MCF 10A (cell line): ENCODE measurements at regions of chr5 and their contacts with region 1.

Region 1: GRCh38 chr5:142145106-142145900 is 36.7 kb downstream of the NDFIP1 start:
- DNase-seq: peak; percentile 85
- H3K4me3 Mint-ChIP-seq: no peak overlapping the region
- H3K27ac Mint-ChIP-seq: no peak overlapping the region
- H3K4me1 Mint-ChIP-seq: no peaks in the 10 kb centered on the region
- H3K27me3 Mint-ChIP-seq: no peaks in the 10 kb centered on the region
- CTCF ChIP-seq: peak; percentile 78

Region 2: GRCh38 chr5:141691867-141692532 is 453.3 kb before region 1 on chr5:
- CTCF ChIA-PET with region 1: interaction called, 9 read pairs
- POLR2A ChIA-PET with region 1: no interaction called
- intact Hi-C with region 1: loop called (anchors 2 kb)
- DNase-seq: peak; percentile 87
- H3K4me3 Mint-ChIP-seq: peak overlapping the region; percentile 62
- H3K27ac Mint-ChIP-seq: peak overlapping the region; percentile 43
- H3K4me1 Mint-ChIP-seq: peaks cover 8% of the 10 kb centered on the region
- H3K27me3 Mint-ChIP-seq: peaks cover 35% of the 10 kb centered on the region
- CTCF ChIP-seq: peak; percentile 99

Region 3: DNA sequence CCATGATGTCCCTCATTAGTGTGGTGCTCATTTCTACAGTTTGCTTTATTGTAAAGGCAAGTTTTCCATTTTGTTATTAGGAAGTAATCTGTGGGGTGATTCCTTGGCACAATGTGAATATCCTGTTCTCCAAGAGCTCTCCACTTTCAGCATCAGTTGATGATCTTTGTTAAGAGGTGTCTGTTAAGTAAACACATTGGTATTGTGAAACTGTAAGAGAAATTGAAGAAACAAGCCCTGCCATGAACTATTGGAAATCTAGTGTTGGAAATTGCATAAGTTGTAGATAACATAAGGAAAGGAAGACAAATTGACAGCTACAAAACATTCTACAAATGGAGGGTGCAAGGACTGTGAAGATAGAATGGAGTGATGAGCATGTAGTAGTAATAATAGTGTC is 159.2 kb before region 1 on chr5:
- CTCF ChIA-PET with region 1: interaction called, 172 read pairs
- POLR2A ChIA-PET with region 1: interaction called, 9 read pairs
- intact Hi-C with region 1: no loop called
- DNase-seq: no peak
- H3K4me3 Mint-ChIP-seq: no peak overlapping the region
- H3K27ac Mint-ChIP-seq: no peak overlapping the region
- H3K4me1 Mint-ChIP-seq: no peaks in the 10 kb centered on the region
- H3K27me3 Mint-ChIP-seq: no peaks in the 10 kb centered on the region
- CTCF ChIP-seq: no peak

Region 4: DNA sequence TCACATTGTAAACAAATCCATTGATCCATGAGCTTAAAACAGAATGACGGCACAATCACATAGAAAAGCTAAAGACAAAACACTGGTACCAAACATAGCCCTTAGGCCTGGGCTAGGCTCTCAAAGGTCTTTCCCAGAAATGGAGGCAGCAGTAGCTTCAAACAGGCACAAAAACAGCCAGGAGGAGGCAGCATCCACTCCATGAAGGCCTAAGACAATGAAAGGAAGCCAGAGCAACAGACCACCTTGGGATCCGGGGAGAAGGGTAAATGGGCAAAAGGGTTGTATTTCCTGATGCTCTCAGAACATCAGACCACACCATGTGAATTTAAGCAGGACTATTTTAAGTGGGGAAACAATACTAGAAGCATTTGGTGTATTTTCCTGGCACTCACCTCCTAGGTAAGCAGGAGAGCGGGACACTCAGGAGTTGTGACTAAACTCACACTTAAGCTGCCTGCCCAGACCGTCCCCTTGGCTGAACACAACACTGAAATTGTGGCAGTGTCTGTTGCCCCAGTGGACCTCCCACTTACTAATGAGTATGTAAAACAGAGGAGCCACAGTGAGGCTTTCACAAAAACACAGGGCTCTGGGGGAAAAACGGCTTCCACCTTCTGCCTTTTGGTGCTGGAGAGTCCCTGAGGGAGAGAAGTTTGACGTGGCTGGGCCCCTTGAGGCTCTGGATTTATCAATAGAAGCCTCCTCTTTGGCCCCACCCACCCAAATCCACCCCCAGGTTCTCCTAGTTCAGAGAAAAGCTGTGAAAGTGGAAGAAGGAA is 144.4 kb before region 1 on chr5:
- CTCF ChIA-PET with region 1: interaction called, 186 read pairs
- POLR2A ChIA-PET with region 1: interaction called, 5 read pairs
- intact Hi-C with region 1: no loop called
- DNase-seq: peak; percentile 43
- H3K4me3 Mint-ChIP-seq: no peak overlapping the region
- H3K27ac Mint-ChIP-seq: no peak overlapping the region
- H3K4me1 Mint-ChIP-seq: peaks cover 9% of the 10 kb centered on the region
- H3K27me3 Mint-ChIP-seq: no peaks in the 10 kb centered on the region
- CTCF ChIP-seq: no peak

Region 5: DNA sequence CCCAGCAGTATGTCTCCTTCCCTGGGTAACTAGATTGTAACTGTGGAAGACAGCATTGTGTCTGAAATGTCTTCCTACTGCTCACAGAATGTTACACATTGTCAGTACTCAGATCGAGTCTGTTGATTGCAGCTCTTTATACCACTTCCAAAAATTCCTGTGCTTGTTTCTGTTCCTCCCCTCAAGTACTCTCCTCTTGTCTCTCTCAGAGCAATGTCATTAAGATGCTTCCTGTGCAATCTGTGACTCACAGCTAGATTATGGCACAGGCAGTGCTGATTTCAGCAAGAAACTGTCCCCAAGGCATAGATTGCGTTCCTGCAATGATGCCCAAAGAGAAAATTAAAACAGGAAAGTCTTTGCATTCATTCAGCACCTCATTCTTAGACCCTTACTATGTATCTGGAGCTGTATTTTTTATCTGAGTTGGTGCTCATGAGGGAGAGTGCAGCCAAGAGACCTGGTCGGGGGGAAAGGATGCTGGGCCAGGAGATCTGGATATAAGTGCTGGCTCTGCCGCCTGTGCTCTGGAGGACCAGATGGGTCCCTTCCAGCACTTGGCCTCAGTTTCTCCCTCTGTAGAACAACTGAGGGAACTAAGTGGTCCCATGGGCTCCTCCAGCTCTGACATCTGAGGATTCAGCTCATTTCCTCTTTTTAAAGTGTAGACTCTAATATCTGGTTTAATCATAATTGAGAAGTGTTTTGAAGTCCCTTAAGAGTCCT is 91.7 kb before region 1 on chr5:
- CTCF ChIA-PET with region 1: interaction called, 14 read pairs
- POLR2A ChIA-PET with region 1: no interaction called
- intact Hi-C with region 1: no loop called
- DNase-seq: peak; percentile 71
- H3K4me3 Mint-ChIP-seq: no peak overlapping the region
- H3K27ac Mint-ChIP-seq: no peak overlapping the region
- H3K4me1 Mint-ChIP-seq: peaks cover 33% of the 10 kb centered on the region
- H3K27me3 Mint-ChIP-seq: no peaks in the 10 kb centered on the region
- CTCF ChIP-seq: no peak

Region 6: GRCh38 chr5:142120247-142120935 is 24.9 kb before region 1 on chr5:
- CTCF ChIA-PET with region 1: interaction called, 16 read pairs
- POLR2A ChIA-PET with region 1: interaction called, 3 read pairs
- intact Hi-C with region 1: no loop called
- DNase-seq: no peak
- H3K4me3 Mint-ChIP-seq: no peak overlapping the region
- H3K27ac Mint-ChIP-seq: peak overlapping the region; percentile 74
- H3K4me1 Mint-ChIP-seq: peaks cover 47% of the 10 kb centered on the region
- H3K27me3 Mint-ChIP-seq: no peaks in the 10 kb centered on the region
- CTCF ChIP-seq: no peak

Region 7: GRCh38 chr5:142156839-142157463 is 11.6 kb after region 1 on chr5:
- CTCF ChIA-PET with region 1: interaction called, 13 read pairs
- POLR2A ChIA-PET with region 1: interaction called, 3 read pairs
- intact Hi-C with region 1: no loop called
- DNase-seq: no peak
- H3K4me3 Mint-ChIP-seq: no peak overlapping the region
- H3K27ac Mint-ChIP-seq: no peak overlapping the region
- H3K4me1 Mint-ChIP-seq: no peaks in the 10 kb centered on the region
- H3K27me3 Mint-ChIP-seq: no peaks in the 10 kb centered on the region
- CTCF ChIP-seq: no peak

Region 8: GRCh38 chr5:142201471-142201887 is 56.2 kb after region 1 on chr5:
- CTCF ChIA-PET with region 1: no interaction called
- POLR2A ChIA-PET with region 1: no interaction called
- intact Hi-C with region 1: no loop called
- DNase-seq: peak; percentile 86
- H3K4me3 Mint-ChIP-seq: no peak overlapping the region
- H3K27ac Mint-ChIP-seq: no peak overlapping the region
- H3K4me1 Mint-ChIP-seq: peaks cover 7% of the 10 kb centered on the region
- H3K27me3 Mint-ChIP-seq: no peaks in the 10 kb centered on the region
- CTCF ChIP-seq: no peak